ENCODE measurements at regions of chr22 and their contacts with region 1.

Region 1: DNA sequence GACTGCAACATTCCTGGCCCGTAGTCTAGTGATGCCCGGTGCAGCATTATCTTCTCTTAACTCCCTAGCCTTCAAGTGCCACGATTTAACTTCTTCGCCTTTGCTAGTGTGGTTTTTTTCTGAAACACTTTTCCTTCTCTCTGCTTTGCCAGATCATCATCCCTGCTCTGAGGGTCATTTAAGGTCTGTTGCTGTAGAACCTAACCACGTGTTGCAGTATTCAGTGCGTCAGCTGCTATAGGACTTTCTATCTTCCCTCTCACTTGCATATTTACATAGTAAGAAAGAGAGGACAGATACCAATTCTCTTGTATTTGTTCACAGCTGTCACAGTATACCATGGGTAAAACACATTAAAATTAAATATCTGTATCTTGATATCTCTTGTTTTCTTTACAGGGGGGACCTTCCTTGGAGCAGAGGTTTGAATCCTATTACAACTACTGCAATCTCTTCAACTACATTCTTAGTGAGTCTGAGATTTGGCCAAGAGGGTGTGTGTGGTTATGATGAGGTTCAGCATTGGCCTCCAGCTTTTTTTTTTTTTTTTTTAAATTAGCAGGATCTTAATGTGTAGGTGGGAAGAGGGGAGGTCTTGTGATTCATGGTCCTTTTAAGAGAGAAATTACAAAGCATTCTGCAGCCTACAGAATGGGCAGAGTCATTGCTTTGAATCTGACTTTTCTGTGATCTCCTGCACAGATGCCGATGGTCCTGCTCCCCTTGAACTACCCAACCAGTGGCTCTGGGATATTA is 13.5 kb downstream of the EIF3L start:
- DNase-seq: no peak
- H3K4me3 ChIP-seq: no peak overlapping the region
- H3K27me3 ChIP-seq: no peaks in the 10 kb centered on the region
- CTCF ChIP-seq: no peak

Region 2: DNA sequence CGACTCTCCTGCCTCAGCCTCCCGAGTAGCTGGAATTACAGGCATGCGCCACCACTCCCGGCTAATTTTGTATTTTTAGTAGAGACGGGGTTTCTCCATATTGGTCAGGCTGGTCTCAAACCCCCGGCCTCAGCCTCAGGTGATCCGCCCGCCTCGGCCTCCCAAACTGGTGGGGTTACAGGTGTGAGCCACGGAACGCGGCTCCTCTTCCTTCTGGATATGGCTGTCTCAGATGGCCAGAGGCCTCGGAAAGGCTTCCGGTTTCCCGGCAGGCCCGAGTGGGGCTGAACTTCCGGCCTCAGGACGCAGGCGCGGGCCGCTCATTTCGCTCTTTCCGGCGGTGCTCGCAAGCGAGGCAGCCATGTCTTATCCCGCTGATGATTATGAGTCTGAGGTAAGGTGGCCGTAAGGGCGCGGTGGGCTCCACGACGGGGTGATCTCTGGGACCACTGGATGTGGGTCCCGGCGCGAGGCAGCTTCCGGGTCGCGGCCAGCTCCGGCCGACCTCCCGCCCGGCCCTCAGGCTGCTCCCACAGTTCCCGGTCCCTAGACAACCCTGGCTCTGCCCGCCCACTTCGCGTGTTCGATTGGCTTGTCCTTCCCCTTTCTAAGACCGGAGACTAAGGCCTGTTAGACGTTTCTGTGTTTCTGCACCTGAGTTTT is 13.5 kb before region 1 on chr22 and contains the start of gene EIF3L:
- CTCF ChIA-PET with region 1: interaction called, 27 read pairs
- POLR2A ChIA-PET with region 1: no interaction called
- DNase-seq: peak; percentile 42
- H3K4me3 ChIP-seq: peak within 1 kb of the TSS; percentile 92
- H3K27me3 ChIP-seq: no peaks in the 10 kb centered on the region
- CTCF ChIP-seq: no peak
- polyA plus RNA-seq, gene EIF3L: 705 and 755 TPM in 2 replicates

Region 3: GRCh38 chr22:37880668-37881440 is 18.1 kb after region 1 on chr22:
- CTCF ChIA-PET with region 1: interaction called, 19 read pairs
- POLR2A ChIA-PET with region 1: no interaction called
- DNase-seq: no peak
- H3K4me3 ChIP-seq: no peak overlapping the region
- H3K27me3 ChIP-seq: no peaks in the 10 kb centered on the region
- CTCF ChIP-seq: no peak